CD4-positive, alpha-beta memory T cell (primary cell): ENCODE measurements at regions of chr19 and their contacts with region 1.

Region 1: DNA sequence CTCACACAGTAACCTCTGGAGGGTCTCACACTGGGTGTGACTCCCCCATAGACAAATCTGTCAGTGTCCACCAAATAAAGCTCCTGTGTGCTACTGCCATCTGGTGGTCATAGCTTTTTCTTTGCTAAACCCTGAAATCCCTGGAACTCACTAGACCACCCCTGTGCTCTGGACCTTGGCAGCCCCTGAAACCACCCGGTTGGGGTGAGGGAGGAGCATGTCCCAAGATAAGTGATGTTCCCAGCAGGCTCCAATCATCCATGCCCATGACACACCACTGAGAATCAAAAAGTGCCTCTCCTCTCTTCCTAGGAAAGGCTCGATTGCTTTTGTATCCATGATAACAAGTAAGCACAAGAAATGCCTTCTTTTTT is 6.5 kb upstream of the HSD17B14 start:
- DNase-seq: peak; percentile 42 to 60 (median 55)
- H3K4me3 ChIP-seq: no peak overlapping the region
- H3K4me3 Mint-ChIP-seq: peak overlapping the region in 1 of 8 donors; percentile 33
- H3K27ac ChIP-seq: no peak overlapping the region
- H3K27ac Mint-ChIP-seq: no peak overlapping the region
- H3K4me1 ChIP-seq: no peaks in the 10 kb centered on the region
- H3K4me1 Mint-ChIP-seq: peaks cover 0 to 4% (median 2%) of the 10 kb centered on the region in 4 donors
- H3K27me3 ChIP-seq: no peaks in the 10 kb centered on the region
- H3K27me3 Mint-ChIP-seq: no peaks in the 10 kb centered on the region

Region 2: DNA sequence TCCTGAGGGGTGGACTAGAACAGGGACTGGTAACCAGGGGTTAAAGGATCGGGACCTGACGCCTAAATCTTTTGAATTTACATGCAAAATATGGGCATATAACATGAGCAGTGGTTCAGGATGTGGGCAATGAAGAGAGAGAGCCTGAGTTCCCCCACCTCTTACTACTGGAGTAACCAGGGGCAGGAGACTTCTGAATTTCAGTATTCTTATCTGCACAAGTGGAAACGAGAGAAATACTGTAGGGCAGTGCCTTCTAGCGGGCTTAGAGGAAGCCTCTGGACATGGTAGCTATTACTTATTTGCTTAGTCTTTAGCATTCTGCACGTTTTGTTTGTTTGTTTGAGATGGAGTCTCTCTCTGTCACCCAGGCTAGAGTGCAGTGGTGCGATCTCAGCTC is 58.2 kb before region 1 on chr19:
- CTCF ChIA-PET with region 1: interaction called, 140 read pairs
- POLR2A ChIA-PET with region 1: interaction called, 6 read pairs
- intact Hi-C with region 1: loop called (anchors 1 kb)
- DNase-seq: no peak
- H3K4me3 ChIP-seq: no peak overlapping the region
- H3K4me3 Mint-ChIP-seq: peak overlapping the region in 1 of 8 donors; percentile 17
- H3K27ac ChIP-seq: no peak overlapping the region
- H3K27ac Mint-ChIP-seq: no peak overlapping the region
- H3K4me1 ChIP-seq: no peaks in the 10 kb centered on the region
- H3K4me1 Mint-ChIP-seq: peaks cover 0 to 5% (median 4%) of the 10 kb centered on the region in 4 donors
- H3K27me3 ChIP-seq: no peaks in the 10 kb centered on the region
- H3K27me3 Mint-ChIP-seq: peaks cover 10 to 14% of the 10 kb centered on the region in 2 donors

Region 3: GRCh38 chr19:48853483-48853882 is 10.7 kb after region 1 on chr19:
- CTCF ChIA-PET with region 1: interaction called, 13 read pairs
- POLR2A ChIA-PET with region 1: no interaction called
- intact Hi-C with region 1: no loop called
- DNase-seq: no peak
- H3K4me3 ChIP-seq: no peak overlapping the region
- H3K4me3 Mint-ChIP-seq: no peak overlapping the region
- H3K27ac ChIP-seq: no peak overlapping the region
- H3K27ac Mint-ChIP-seq: no peak overlapping the region
- H3K4me1 ChIP-seq: peaks cover 1% of the 10 kb centered on the region
- H3K4me1 Mint-ChIP-seq: peaks cover 0 to under 1% (median 0%) of the 10 kb centered on the region in 4 donors
- H3K27me3 ChIP-seq: no peaks in the 10 kb centered on the region
- H3K27me3 Mint-ChIP-seq: no peaks in the 10 kb centered on the region

Region 4: DNA sequence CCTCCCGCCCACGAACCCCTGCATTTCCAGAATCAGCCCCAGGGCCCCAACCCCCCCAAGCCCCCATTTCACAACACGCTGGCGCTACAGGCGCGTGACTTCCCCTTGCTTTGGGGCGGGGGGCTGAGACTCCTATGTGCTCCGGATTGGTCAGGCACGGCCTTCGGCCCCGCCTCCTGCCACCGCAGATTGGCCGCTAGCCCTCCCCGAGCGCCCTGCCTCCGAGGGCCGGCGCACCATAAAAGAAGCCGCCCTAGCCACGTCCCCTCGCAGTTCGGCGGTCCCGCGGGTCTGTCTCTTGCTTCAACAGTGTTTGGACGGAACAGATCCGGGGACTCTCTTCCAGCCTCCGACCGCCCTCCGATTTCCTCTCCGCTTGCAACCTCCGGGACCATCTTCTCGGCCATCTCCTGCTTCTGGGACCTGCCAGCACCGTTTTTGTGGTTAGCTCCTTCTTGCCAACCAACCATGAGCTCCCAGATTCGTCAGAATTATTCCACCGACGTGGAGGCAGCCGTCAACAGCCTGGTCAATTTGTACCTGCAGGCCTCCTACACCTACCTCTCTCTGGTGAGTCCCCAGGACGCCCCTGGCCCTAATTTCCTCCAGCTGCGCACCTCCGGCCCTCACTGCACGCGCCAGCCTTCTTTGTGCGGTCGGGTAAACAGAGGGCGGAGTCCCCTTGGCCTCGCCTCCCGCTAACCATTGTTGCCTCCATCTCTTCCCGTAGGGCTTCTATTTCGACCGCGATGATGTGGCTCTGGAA is 122.4 kb after region 1 on chr19 and contains the start of gene FTL:
- CTCF ChIA-PET with region 1: interaction called, 50 read pairs
- POLR2A ChIA-PET with region 1: interaction called, 11 read pairs
- intact Hi-C with region 1: no loop called
- DNase-seq: peak; percentile 81 to 87 (median 85)
- H3K4me3 ChIP-seq: peak within 1 kb of the TSS; percentile 84 to 91
- H3K4me3 Mint-ChIP-seq: peak within 1 kb of the TSS; percentile 93 to 100 (median 96)
- H3K27ac ChIP-seq: peak within 1 kb of the TSS; percentile 64
- H3K27ac Mint-ChIP-seq: peak within 1 kb of the TSS; percentile 96 to 100 (median 97)
- H3K4me1 ChIP-seq: peaks cover 43% of the 10 kb centered on the region
- H3K4me1 Mint-ChIP-seq: peaks cover 30 to 67% (median 46%) of the 10 kb centered on the region in 4 donors
- H3K27me3 ChIP-seq: no peaks in the 10 kb centered on the region
- H3K27me3 Mint-ChIP-seq: no peaks in the 10 kb centered on the region
- total RNA-seq, gene FTL: 1,304 to 1,371 TPM